A549 (cell line): ENCODE measurements at regions of chr9 and their contacts with region 1.

Region 1: DNA sequence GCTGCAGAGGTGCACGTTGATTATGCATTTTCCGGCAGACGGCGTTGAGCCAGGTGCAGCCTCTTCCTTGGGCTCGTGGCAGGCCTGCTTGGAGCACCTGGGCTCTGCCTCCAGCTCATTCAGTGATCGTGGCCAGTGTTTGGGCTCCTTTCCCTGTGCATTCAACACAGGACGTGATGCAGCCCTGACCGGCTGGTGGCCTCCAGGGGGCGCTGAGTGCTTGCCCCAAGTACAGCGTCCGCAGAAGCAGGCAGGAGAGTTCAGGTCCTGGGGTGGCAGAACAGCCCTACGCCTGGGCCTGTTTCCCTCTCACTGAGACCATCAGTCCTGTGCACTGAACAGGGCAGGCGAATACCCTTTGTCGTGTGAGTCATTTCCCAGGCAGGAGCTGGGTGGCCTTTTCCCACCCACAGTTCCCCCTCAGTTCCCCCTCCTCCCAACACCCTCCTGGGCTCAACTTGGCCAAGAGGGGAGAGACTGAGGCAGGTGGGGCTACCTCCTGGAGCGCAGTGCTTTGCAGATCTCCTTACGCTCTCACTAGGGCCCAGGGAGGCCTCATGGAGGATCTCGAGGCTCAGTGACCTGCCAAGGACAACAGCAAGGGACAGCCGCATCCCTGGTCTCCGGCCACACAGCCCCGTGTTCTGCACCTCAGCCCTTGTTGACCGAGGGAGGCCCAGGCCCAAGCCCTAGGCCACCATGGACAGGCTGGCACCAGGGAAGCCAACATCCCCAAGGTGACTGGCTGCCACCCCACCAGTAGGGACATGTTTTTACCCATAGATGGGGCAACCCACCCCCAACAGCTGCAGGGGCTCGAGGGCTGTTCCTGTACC is 52.9 kb downstream of the LRSAM1 start:
- DNase-seq: peak; percentile 48 to 89
- ATAC-seq: peak; percentile 69 to 87
- H3K4me3 ChIP-seq: no peak overlapping the region
- H3K27ac ChIP-seq: peak overlapping the region; percentile 26 to 79; a peak in 4 of 6 replicates
- H3K4me1 ChIP-seq: peaks cover 24% of the 10 kb centered on the region
- CTCF ChIP-seq: peak; percentile 84
- EP300 ChIP-seq: no peak
- POLR2A ChIP-seq: no peak
- RAD21 ChIP-seq: peak; percentile 94 to 96

Region 2: DNA sequence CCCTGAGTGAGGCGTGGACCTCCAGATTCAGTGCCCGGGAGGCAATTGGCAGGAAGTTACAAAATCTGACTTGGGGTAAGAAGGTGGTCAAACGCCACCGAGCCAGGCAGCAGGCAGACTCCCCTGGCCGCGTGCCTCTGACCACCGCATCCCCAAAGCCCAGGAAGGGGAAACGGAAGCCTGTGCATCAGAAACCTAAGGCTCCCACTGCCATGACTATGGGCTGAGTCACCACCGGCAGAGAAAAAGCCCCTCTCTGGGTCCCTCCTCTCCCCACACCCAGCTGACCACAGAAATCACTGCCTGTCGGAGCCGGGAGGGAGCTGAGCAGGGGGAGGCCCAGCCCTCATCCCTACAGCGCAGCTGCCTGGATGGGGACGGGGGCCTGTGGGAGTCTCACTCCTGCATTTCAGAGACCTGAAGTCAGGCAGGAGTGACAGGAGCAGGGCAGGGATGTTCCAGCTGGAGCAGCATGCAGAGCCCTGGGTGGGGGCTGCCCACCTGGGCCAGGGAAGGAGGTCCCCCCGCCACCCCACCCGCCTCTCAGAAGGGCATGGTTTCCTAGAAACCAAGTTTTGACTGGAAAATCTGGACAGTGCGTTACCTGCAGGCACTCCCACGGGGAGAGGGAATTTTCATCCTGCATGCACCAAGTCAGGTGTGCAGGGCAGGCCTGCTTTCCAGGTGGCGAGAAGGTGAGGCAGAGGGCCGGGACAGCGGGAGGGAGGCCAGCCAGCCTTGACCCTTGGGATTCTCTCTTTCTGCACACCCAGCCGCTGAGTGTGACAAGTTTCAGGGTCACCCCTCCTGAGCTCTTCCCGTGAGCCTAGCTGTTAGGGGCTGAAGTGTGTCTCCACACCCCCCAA is 15.4 kb after region 1 on chr9:
- CTCF ChIA-PET with region 1: interaction called, 139 read pairs
- POLR2A ChIA-PET with region 1: no interaction called
- DNase-seq: no peak
- ATAC-seq: peak; percentile 58 to 75
- H3K4me3 ChIP-seq: no peak overlapping the region
- H3K27ac ChIP-seq: peak overlapping the region; percentile 71 to 91
- H3K4me1 ChIP-seq: peaks cover 45% of the 10 kb centered on the region
- CTCF ChIP-seq: no peak
- EP300 ChIP-seq: 0 out of 5 replicates have a peak, but pooled peaks of 1 of the 2 experiments have one; percentile 22
- POLR2A ChIP-seq: no peak
- RAD21 ChIP-seq: no peak

Region 3: DNA sequence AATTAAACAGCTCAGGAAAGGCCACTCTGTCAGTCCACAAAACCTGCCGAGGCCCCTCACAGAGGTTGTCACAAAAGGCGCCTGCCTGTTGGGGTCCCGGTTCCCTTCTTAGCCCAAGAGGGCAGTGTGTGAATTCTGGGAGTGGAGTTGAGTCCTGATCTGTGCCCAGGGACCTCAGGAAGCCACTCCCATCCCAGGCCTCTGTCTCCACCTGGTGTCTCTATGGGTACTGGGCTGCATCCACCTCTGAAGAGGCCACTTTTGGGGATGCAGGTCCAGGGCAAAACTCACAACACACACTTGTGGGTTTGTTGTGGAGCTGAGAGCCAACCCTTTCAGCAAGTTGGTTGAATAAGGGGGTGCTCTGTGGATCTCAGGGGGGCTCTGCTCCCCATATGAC is 33.6 kb after region 1 on chr9:
- CTCF ChIA-PET with region 1: interaction called, 80 read pairs
- POLR2A ChIA-PET with region 1: no interaction called
- DNase-seq: no peak
- ATAC-seq: peak; percentile 71 to 75; a peak in 5 of 6 replicates
- H3K4me3 ChIP-seq: no peak overlapping the region
- H3K27ac ChIP-seq: peak overlapping the region in 1 of 2 experiments; percentile 66; a peak in 3 of 6 replicates
- H3K4me1 ChIP-seq: peaks cover 65% of the 10 kb centered on the region
- CTCF ChIP-seq: peak; percentile 30; the same call in 2 of the 3 replicates
- EP300 ChIP-seq: no peak
- POLR2A ChIP-seq: no peak
- RAD21 ChIP-seq: peak; percentile 43 to 63

Region 4: GRCh38 chr9:127550751-127551150 is 46.6 kb after region 1 on chr9:
- CTCF ChIA-PET with region 1: interaction called, 68 read pairs
- POLR2A ChIA-PET with region 1: interaction called, 3 read pairs
- DNase-seq: no peak
- ATAC-seq: no peak
- H3K4me3 ChIP-seq: no peak overlapping the region
- H3K27ac ChIP-seq: peak overlapping the region in 1 of 2 experiments; percentile 63; a peak in 3 of 6 replicates
- H3K4me1 ChIP-seq: peaks cover 82% of the 10 kb centered on the region
- CTCF ChIP-seq: no peak
- EP300 ChIP-seq: no peak
- POLR2A ChIP-seq: no peak
- RAD21 ChIP-seq: no peak

Region 5: DNA sequence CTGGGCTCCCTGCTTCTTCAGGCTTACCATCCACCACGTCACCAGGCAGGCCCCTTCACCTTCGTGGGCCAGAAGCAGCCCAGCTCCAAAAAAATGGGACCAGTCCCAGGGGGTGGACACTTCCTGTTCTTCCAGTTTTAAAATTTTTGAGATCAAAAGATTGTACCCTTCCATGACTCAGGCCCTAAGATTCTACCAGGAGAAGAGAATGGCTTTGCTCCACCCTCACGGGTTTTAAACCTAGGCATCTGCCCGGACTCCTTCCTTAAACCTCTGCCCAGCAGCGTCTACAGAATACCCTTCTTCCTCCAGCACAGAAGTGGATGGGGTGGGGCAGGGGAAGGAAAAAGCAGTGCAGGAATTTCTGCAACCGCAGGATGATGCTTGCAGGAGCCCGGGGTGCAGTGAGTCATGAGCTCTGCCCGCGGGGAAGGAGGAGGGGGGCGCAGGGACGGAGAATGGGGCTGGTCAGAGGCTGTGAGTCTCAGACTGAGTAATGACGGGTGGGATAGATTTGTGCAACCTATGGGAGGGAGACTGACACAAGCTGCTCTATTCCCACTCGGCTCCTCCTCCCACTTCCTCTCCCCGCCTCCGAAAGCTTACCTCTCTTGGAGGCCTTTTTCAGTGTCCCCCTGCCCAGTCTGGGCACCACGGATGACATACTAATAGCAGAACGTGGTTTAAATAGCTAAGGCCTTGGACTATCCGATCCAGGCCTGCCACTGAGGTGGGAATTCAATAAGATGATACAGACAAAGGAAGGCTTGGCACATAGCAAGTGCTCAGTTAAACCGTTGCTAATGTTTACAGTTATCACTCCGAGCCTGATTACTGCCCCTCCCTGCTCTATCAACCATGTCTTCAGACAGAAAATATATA is 57.7 kb after region 1 on chr9:
- CTCF ChIA-PET with region 1: interaction called, 68 read pairs
- POLR2A ChIA-PET with region 1: no interaction called
- DNase-seq: peak; percentile 93 to 95
- ATAC-seq: peak; percentile 86 to 91
- H3K4me3 ChIP-seq: peak overlapping the region; percentile 3; the same call in 1 of the 3 replicates
- H3K27ac ChIP-seq: peak overlapping the region; percentile 92 to 93
- H3K4me1 ChIP-seq: peaks cover 97% of the 10 kb centered on the region
- CTCF ChIP-seq: no peak
- EP300 ChIP-seq: peak in 1 of 2 experiments; percentile 78; a peak in 2 of 5 replicates
- POLR2A ChIP-seq: no peak
- RAD21 ChIP-seq: peak; percentile 9 to 39; a peak in 3 of 5 replicates

Region 6: DNA sequence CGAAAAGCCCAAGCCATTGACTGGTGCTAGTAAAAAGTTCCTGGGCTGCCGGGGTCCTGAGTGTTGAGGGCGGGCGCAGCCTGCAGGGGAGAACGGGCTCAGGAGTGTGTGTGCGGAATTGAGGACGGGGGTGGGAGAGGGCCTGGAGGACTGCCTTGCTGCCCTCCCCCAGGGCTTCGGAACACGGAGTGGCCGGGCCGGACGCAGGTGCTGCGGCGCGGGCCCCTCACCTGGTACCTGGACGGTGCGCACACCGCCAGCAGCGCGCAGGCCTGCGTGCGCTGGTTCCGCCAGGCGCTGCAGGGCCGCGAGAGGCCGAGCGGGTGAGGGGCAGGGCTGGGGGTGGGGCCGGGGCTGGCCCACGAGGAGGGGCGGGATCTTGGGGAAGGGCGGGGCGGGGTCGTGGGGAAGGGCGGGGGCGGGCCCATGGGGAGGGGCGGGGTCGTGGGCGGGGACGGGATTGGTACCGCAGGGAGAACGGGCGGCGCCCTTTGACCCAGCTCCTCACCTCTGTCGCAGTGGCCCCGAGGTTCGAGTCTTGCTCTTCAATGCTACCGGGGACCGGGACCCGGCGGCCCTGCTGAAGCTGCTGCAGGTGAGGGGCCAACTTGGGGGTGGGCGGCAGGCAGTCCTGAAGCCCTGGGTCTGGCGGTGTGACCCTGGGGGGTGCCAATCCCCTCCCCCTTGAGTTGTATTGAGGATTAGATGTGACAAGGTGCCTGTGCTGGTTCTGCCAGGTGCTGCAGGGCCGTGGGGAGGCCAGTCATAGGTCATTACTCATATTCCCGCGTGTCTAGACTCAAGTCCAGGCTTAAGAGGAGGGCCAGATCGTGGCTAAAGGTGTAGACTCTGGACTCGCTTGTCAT is 305.6 kb after region 1 on chr9:
- CTCF ChIA-PET with region 1: no interaction called
- POLR2A ChIA-PET with region 1: no interaction called
- DNase-seq: peak in 1 of 2 experiments; percentile 37
- ATAC-seq: peak; percentile 14 to 61; a peak in 3 of 6 replicates
- H3K4me3 ChIP-seq: no peak overlapping the region
- H3K27ac ChIP-seq: no peak overlapping the region; a peak in 1 of 6 replicates
- H3K4me1 ChIP-seq: peaks cover 11% of the 10 kb centered on the region; the same call in 2 of the 3 replicates
- CTCF ChIP-seq: no peak
- EP300 ChIP-seq: no peak
- POLR2A ChIP-seq: no peak
- RAD21 ChIP-seq: no peak